HepG2 (cell line): ENCODE measurements at regions of chr12 and their contacts with region 1.

Region 1: GRCh38 chr12:79662046-79662811 is 28.5 kb downstream of the PAWR start:
- DNase-seq: peak; percentile 84
- ATAC-seq: peak; percentile 82
- H3K4me3 ChIP-seq: no peak overlapping the region
- H3K27ac ChIP-seq: peak overlapping the region; percentile 36
- H3K4me1 ChIP-seq: peaks cover 32% of the 10 kb centered on the region
- H3K27me3 ChIP-seq: no peaks in the 10 kb centered on the region
- CTCF ChIP-seq: no peak
- EP300 ChIP-seq: peak in 1 of 2 experiments; percentile 54; a peak in 1 of 4 replicates
- POLR2A ChIP-seq: no peak
- RAD21 ChIP-seq: no peak

Region 2: GRCh38 chr12:79674629-79675028 is 12.4 kb after region 1 on chr12:
- CTCF ChIA-PET with region 1: no interaction called
- POLR2A ChIA-PET with region 1: no interaction called
- in situ Hi-C with region 1: no loop called
- intact Hi-C with region 1: loop called (anchors 1 kb)
- DNase-seq: no peak
- ATAC-seq: no peak
- H3K4me3 ChIP-seq: no peak overlapping the region
- H3K27ac ChIP-seq: no peak overlapping the region
- H3K4me1 ChIP-seq: peaks cover 53% of the 10 kb centered on the region
- H3K27me3 ChIP-seq: no peaks in the 10 kb centered on the region
- CTCF ChIP-seq: no peak
- EP300 ChIP-seq: no peak
- POLR2A ChIP-seq: no peak
- RAD21 ChIP-seq: no peak

Region 3: DNA sequence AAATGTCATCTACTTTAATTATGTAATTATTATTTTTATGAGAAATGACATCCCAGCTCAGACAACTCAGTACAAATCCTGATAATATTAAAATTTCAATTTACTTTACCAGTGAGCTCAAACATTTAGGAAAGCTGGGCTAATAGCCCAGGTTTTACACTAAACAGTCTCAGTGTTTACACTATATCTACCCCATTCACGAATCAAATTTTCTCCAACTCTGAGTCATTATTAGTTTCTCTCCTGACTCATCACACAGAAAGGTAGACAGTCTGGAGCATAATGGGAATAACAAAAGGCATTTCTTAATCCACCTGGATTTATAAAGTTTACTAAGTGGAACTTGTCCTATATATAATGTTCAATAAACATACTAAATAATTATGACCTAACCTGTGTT is 22.8 kb after region 1 on chr12:
- CTCF ChIA-PET with region 1: no interaction called
- POLR2A ChIA-PET with region 1: no interaction called
- in situ Hi-C with region 1: no loop called
- intact Hi-C with region 1: loop called (anchors 2 kb)
- DNase-seq: peak; percentile 26
- ATAC-seq: 0 out of 3 replicates have a peak, but pooled peaks have one; percentile 9
- H3K4me3 ChIP-seq: peak overlapping the region; percentile 35 to 97 (median 76); a peak in 3 of 6 replicates
- H3K27ac ChIP-seq: peak overlapping the region; percentile 11
- H3K4me1 ChIP-seq: peaks cover 51% of the 10 kb centered on the region
- H3K27me3 ChIP-seq: no peaks in the 10 kb centered on the region; a peak in 1 of 5 replicates
- CTCF ChIP-seq: no peak
- EP300 ChIP-seq: no peak
- POLR2A ChIP-seq: no peak
- RAD21 ChIP-seq: no peak